ENCODE measurements at regions of chr18 and their contacts with region 1.

Region 1: GRCh38 chr18:864872-865273 is 39.8 kb upstream of the ADCYAP1 start:
- DNase-seq: peak; percentile 60
- H3K4me3 ChIP-seq: no peak overlapping the region
- H3K27ac ChIP-seq: no peak overlapping the region
- H3K4me1 ChIP-seq: no peaks in the 10 kb centered on the region
- H3K27me3 ChIP-seq: peaks cover 9 to 21% of the 10 kb centered on the region in 2 experiments
- CTCF ChIP-seq: peak; percentile 98 to 99
- POLR2A ChIP-seq: no peak

Region 2: DNA sequence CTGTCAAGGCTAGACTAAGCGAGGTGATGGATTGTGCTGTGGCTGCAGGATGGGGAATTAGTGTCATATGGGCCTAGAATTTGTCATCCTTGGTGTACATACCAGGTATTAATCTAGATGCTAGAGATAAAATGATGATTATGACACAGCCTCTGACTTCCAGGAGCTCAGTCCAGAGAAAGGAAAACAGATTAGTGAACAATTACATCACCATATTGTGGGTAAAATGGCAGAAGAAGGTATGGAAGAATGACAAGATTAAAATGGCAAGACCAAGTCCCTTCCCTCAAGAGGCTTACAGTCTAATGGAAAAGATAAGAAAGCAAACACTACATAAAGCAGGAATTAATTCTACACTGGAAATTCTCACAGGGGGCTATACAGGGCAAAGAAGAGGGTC is 233.3 kb before region 1 on chr18:
- CTCF ChIA-PET with region 1: no interaction called
- POLR2A ChIA-PET with region 1: no interaction called
- dilution Hi-C with region 1: no loop called
- intact Hi-C with region 1: no loop called
- DNase-seq: no peak
- H3K4me3 ChIP-seq: no peak overlapping the region
- H3K27ac ChIP-seq: no peak overlapping the region
- H3K4me1 ChIP-seq: peaks cover 5% of the 10 kb centered on the region
- H3K27me3 ChIP-seq: peaks cover 0 to 2% of the 10 kb centered on the region in 2 experiments
- CTCF ChIP-seq: no peak
- POLR2A ChIP-seq: no peak

Region 3: DNA sequence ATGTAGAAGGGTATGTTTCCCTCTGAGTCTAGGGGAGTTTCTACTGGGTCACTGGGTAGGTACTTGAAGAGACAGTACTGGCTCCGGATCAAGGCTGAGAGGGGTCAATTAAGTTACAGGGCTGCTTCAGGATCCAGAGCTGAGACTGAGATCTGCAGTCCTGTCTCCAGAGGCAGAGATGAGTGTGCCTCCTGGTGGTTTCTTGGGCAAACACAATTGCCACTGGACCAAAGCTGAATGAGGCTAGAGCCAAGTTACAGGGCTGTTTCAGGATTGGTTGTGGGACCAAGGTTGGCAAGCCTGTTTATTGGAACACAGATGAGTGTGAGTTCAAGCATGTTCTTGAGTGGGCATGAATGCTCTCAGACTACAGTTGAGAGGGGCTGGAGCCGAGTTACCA is 197.7 kb after region 1 on chr18:
- CTCF ChIA-PET with region 1: interaction called, 27 read pairs
- POLR2A ChIA-PET with region 1: no interaction called
- dilution Hi-C with region 1: no loop called
- intact Hi-C with region 1: loop called (anchors 1 kb)
- DNase-seq: peak; percentile 18
- H3K4me3 ChIP-seq: no peak overlapping the region
- H3K27ac ChIP-seq: no peak overlapping the region
- H3K4me1 ChIP-seq: no peaks in the 10 kb centered on the region
- H3K27me3 ChIP-seq: no peaks in the 10 kb centered on the region
- CTCF ChIP-seq: peak in 1 of 2 donors; percentile 48
- POLR2A ChIP-seq: no peak

Region 4: DNA sequence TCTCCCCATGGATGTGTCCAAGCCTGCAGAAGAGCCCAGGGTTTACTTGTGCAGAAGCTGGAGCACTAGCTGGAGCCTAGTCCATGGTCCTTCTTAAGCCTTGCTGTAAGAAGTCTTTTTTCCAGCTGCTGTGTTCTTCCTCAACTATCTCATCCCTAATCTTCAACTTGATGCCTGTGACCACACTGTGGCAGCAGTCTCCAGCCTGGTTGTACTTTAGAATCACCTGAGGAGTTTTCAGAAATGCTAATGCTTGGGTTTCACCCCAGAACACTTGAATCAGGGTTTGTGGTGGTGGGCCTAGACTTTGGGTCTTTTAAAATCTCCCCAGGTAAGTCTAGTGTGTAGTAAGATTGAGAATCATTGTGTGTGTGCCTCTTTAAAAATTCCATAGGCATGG is 213.4 kb after region 1 on chr18:
- CTCF ChIA-PET with region 1: no interaction called
- POLR2A ChIA-PET with region 1: no interaction called
- dilution Hi-C with region 1: no loop called
- intact Hi-C with region 1: no loop called
- DNase-seq: no peak
- H3K4me3 ChIP-seq: no peak overlapping the region
- H3K27ac ChIP-seq: no peak overlapping the region
- H3K4me1 ChIP-seq: no peaks in the 10 kb centered on the region
- H3K27me3 ChIP-seq: peaks cover 2 to 3% of the 10 kb centered on the region in 2 experiments
- CTCF ChIP-seq: no peak
- POLR2A ChIP-seq: no peak

Region 5: DNA sequence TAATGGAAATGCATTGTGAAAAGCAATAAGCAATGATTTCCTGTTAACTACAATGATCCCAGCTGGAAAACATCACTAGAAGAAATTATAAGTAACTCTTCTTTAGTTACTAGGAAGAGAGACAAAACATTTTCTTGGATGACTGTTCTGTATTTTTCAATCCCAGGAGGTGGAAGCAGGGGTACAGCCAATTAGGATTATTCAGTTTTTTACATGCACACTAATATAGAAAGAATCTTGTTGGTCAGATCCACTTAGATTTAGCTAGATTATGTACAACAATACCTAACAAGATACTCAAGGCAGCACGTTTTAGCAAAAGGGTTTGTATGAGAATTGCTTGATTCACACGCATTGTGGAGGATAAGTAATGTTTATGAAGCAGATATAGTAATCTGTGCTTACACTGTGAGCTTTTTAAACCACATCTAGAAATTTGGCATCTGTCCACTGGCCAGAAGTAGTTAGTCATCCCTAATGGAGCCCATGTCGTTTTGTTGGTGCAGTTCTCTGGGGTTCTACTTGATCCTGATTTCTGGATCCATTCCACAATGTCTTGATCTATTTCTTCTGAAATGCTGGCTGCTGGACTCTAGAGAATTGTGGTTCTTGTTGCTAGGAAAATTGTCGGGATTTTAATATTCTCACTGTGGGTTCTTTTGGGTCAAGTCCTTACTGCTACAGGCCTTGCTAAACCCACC is 239.5 kb after region 1 on chr18:
- CTCF ChIA-PET with region 1: no interaction called
- POLR2A ChIA-PET with region 1: no interaction called
- dilution Hi-C with region 1: no loop called
- intact Hi-C with region 1: no loop called
- DNase-seq: peak; percentile 8
- H3K4me3 ChIP-seq: no peak overlapping the region
- H3K27ac ChIP-seq: no peak overlapping the region
- H3K4me1 ChIP-seq: no peaks in the 10 kb centered on the region
- H3K27me3 ChIP-seq: no peaks in the 10 kb centered on the region
- CTCF ChIP-seq: no peak
- POLR2A ChIP-seq: no peak

Region 6: GRCh38 chr18:1240701-1241100 is 375.8 kb after region 1 on chr18:
- CTCF ChIA-PET with region 1: no interaction called
- POLR2A ChIA-PET with region 1: no interaction called
- dilution Hi-C with region 1: no loop called
- intact Hi-C with region 1: no loop called
- DNase-seq: no peak
- H3K4me3 ChIP-seq: no peak overlapping the region
- H3K27ac ChIP-seq: no peak overlapping the region
- H3K4me1 ChIP-seq: no peaks in the 10 kb centered on the region
- H3K27me3 ChIP-seq: no peaks in the 10 kb centered on the region
- CTCF ChIP-seq: no peak
- POLR2A ChIP-seq: no peak

Region 7: GRCh38 chr18:1872274-1872673 is 1007.4 kb after region 1 on chr18:
- CTCF ChIA-PET with region 1: no interaction called
- POLR2A ChIA-PET with region 1: no interaction called
- dilution Hi-C with region 1: no loop called
- intact Hi-C with region 1: loop called (anchors 5 kb)
- DNase-seq: no peak
- H3K4me3 ChIP-seq: no peak overlapping the region
- H3K27ac ChIP-seq: no peak overlapping the region
- H3K4me1 ChIP-seq: no peaks in the 10 kb centered on the region
- H3K27me3 ChIP-seq: no peaks in the 10 kb centered on the region
- CTCF ChIP-seq: no peak
- POLR2A ChIP-seq: no peak

Region 8: DNA sequence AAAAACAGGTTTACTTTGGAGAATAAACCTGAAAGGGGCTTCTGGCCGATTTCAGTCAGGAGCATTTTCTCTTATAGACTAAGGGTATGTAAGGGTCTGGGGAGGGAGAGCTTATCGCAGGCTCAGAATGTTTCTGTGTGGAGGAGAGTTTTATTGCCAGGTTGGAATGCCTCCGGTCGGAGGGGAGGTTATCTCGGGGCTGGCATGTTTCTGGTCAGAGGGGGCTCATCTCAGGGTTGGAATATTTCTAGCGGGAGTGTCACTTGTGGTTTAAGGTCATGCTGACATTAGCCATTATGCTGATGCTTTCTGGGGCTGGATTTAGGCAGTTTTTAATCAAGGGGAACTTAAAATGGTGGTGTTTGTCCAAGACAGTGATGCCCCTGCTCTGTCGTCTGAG is 1372.8 kb after region 1 on chr18:
- CTCF ChIA-PET with region 1: no interaction called
- POLR2A ChIA-PET with region 1: no interaction called
- dilution Hi-C with region 1: no loop called
- intact Hi-C with region 1: loop called (anchors 5 kb)
- DNase-seq: no peak
- H3K4me3 ChIP-seq: no peak overlapping the region
- H3K27ac ChIP-seq: no peak overlapping the region
- H3K4me1 ChIP-seq: no peaks in the 10 kb centered on the region
- H3K27me3 ChIP-seq: peaks cover 15 to 34% of the 10 kb centered on the region in 2 experiments
- CTCF ChIP-seq: no peak
- POLR2A ChIP-seq: no peak

Region 9: DNA sequence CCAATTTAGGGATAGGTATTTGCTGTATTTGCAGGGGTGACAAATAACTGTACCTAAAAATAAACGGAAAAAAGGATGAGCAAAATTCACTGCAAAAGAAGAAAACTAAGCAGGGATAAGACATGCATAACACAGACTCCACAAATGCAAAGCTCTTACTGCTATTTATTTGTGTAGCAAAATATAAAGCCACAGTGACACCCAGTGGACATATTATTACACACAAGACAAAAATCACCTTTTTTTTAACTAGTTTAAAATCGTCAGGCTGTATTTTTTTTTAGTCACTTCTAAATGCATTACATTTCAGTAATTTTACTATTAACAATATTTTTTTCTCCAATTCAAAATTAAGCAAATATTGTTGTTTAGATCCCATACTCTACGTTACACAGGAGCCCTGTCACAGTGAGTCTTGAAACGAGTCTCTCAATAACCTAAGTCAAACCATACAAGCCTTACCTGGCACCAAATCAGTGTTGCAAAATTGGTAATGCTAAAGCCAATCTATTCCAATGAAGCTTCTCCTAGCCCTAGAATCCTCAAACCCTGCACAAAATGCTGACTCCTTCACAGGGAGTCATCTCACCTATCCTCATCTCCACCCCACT is 1682.7 kb after region 1 on chr18:
- CTCF ChIA-PET with region 1: interaction called, 23 read pairs
- POLR2A ChIA-PET with region 1: no interaction called
- dilution Hi-C with region 1: no loop called
- intact Hi-C with region 1: loop called (anchors 1 kb)
- DNase-seq: peak; percentile 60
- H3K4me3 ChIP-seq: no peak overlapping the region
- H3K27ac ChIP-seq: no peak overlapping the region
- H3K4me1 ChIP-seq: no peaks in the 10 kb centered on the region
- H3K27me3 ChIP-seq: no peaks in the 10 kb centered on the region
- CTCF ChIP-seq: peak; percentile 6 to 28
- POLR2A ChIP-seq: no peak